ENCODE measurements at regions of chr16 and their contacts with region 1.

Region 1: GRCh38 chr16:68085259-68086071 is at the start of gene NFATC3:
- DNase-seq: peak; percentile 98
- ATAC-seq: peak; percentile 65
- H3K4me3 Mint-ChIP-seq: peak within 1 kb of the TSS; percentile 97
- H3K27ac Mint-ChIP-seq: peak within 1 kb of the TSS; percentile 78
- H3K4me1 Mint-ChIP-seq: peaks cover 20% of the 10 kb centered on the region
- H3K27me3 Mint-ChIP-seq: no peaks in the 10 kb centered on the region
- CTCF ChIP-seq: no peak
- total RNA-seq, gene NFATC3: 32.5 to 34.6 TPM (median 33.3 TPM) in 3 replicates

Region 2: GRCh38 chr16:67942200-67942509 is 143.3 kb before region 1 on chr16:
- CTCF ChIA-PET with region 1: interaction called, 13 read pairs
- POLR2A ChIA-PET with region 1: no interaction called
- DNase-seq: peak; percentile 78
- ATAC-seq: peak; percentile 83
- H3K4me3 Mint-ChIP-seq: no peak overlapping the region
- H3K27ac Mint-ChIP-seq: no peak overlapping the region
- H3K4me1 Mint-ChIP-seq: peaks cover 7% of the 10 kb centered on the region
- H3K27me3 Mint-ChIP-seq: no peaks in the 10 kb centered on the region
- CTCF ChIP-seq: peak; percentile 63

Region 3: GRCh38 chr16:68072038-68072695 is 13.3 kb before region 1 on chr16:
- CTCF ChIA-PET with region 1: interaction called, 10 read pairs
- POLR2A ChIA-PET with region 1: no interaction called
- DNase-seq: no peak
- ATAC-seq: no peak
- H3K4me3 Mint-ChIP-seq: no peak overlapping the region
- H3K27ac Mint-ChIP-seq: no peak overlapping the region
- H3K4me1 Mint-ChIP-seq: no peaks in the 10 kb centered on the region
- H3K27me3 Mint-ChIP-seq: no peaks in the 10 kb centered on the region
- CTCF ChIP-seq: no peak

Region 4: DNA sequence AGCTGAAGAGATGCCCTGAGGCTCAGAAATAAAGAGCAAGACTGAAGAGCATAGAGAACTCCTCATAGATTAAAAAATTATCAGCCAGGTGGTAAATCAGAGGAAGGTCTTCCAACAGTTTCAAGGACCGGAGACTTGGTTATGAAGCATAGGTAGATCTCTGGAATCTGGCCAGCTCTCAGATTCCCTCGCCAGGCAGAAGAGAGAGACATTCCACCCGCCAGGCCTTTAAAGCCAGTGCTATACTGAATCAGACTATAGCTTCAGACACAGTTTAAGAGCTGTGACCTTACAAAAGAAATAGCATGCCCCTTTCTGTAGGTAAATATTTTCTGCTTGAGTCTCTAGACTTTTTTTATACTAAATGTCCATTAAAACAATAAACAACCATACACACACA is 70.0 kb after region 1 on chr16:
- CTCF ChIA-PET with region 1: no interaction called
- POLR2A ChIA-PET with region 1: no interaction called
- DNase-seq: no peak
- ATAC-seq: no peak
- H3K4me3 Mint-ChIP-seq: no peak overlapping the region
- H3K27ac Mint-ChIP-seq: no peak overlapping the region
- H3K4me1 Mint-ChIP-seq: no peaks in the 10 kb centered on the region
- H3K27me3 Mint-ChIP-seq: no peaks in the 10 kb centered on the region
- CTCF ChIP-seq: no peak

Region 5: GRCh38 chr16:68179196-68179795 is 93.8 kb after region 1 on chr16:
- CTCF ChIA-PET with region 1: no interaction called
- POLR2A ChIA-PET with region 1: no interaction called
- DNase-seq: no peak
- ATAC-seq: no peak
- H3K4me3 Mint-ChIP-seq: no peak overlapping the region
- H3K27ac Mint-ChIP-seq: no peak overlapping the region
- H3K4me1 Mint-ChIP-seq: no peaks in the 10 kb centered on the region
- H3K27me3 Mint-ChIP-seq: no peaks in the 10 kb centered on the region
- CTCF ChIP-seq: no peak

Region 6: DNA sequence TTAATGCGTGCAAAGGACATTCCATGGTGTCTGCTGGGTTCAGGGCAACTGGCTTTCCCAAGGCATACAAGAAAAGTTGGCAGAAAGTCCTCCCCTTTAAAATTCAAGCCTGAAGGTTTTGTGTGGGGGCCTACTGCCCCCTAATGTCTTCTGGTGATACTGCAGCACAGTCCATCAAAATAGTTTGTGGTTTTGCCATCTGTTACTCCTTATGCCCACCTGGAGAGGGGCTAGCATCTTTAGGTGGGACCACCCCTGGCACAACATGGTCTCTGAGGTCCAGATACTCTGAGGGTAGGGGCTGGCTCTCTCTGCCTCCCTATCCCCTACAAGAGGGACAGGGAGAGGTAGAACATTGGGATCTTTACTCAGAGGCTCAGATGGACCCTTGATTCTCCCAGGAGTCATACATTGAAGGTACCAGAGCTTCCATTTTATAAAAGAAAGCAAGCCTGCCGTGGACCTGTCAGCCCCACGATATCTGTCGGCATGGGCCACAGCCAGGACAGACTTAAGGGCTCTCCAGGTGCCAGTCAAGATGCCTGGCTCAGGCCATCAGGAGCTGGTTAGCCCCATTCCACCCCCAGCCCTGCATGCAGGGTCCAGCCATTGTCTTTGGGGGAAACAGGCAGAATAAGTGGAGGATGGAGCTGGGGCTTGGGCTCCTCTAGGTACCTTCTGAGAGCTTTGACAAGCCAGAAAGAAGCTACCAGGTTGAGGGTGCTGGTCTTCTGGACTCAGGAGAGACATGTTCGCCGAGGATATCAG is 144.2 kb after region 1 on chr16:
- CTCF ChIA-PET with region 1: interaction called, 11 read pairs
- POLR2A ChIA-PET with region 1: interaction called, 39 read pairs
- DNase-seq: peak; percentile 61
- ATAC-seq: peak; percentile 41
- H3K4me3 Mint-ChIP-seq: no peak overlapping the region
- H3K27ac Mint-ChIP-seq: peak overlapping the region; percentile 74
- H3K4me1 Mint-ChIP-seq: peaks cover 17% of the 10 kb centered on the region
- H3K27me3 Mint-ChIP-seq: no peaks in the 10 kb centered on the region
- CTCF ChIP-seq: peak; percentile 76

Region 7: DNA sequence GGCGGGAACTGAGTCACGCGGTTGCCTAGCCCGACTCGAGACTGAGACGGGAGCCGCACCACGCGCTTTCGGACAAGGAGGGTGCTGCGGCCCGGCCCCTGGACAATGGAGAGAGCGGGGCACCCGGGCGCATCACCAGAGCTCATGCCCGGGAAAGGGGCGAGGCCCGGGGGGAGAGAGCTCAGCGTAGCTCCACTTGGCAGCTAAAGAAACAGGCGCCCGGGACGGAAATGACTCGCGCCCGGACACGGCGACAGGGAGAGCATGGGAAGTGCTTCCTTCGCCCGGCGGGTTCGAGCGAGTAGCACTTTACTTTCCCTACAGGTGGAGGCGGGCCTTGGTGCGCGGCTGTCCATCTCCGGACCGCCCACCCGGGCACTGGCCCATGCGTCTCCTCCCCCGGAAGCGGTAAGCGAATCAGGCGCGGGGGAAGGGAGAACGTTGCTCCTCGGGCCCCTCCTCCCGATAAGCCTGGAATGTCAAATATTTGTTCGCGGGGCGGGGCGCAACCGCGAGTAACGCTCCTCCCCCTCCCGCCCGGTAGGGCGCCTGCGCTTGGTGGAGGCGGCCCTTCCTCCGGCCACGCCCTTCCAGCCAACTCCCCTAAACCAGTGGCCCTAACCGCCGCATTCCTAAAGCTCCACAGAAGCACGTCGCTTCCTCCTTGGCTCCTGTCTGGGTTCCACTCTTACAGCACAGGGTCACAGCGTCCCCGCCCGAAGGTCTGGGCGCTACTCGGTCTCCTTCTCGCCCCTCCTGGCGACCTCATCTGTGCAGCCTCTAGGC is 152.0 kb after region 1 on chr16:
- CTCF ChIA-PET with region 1: interaction called, 17 read pairs
- POLR2A ChIA-PET with region 1: interaction called, 39 read pairs
- DNase-seq: peak; percentile 99
- ATAC-seq: peak; percentile 79
- H3K4me3 Mint-ChIP-seq: peak overlapping the region; percentile 94
- H3K27ac Mint-ChIP-seq: peak overlapping the region; percentile 98
- H3K4me1 Mint-ChIP-seq: peaks cover 24% of the 10 kb centered on the region
- H3K27me3 Mint-ChIP-seq: peaks cover 14% of the 10 kb centered on the region
- CTCF ChIP-seq: no peak

Measured in WTC11 (cell line).